Activated CD4-positive, alpha-beta T cell treated with anti-CD3 and anti-CD28 coated beads for 36 hours (primary cell): ENCODE measurements at regions of chr12 and their contacts with region 1.

Region 1: DNA sequence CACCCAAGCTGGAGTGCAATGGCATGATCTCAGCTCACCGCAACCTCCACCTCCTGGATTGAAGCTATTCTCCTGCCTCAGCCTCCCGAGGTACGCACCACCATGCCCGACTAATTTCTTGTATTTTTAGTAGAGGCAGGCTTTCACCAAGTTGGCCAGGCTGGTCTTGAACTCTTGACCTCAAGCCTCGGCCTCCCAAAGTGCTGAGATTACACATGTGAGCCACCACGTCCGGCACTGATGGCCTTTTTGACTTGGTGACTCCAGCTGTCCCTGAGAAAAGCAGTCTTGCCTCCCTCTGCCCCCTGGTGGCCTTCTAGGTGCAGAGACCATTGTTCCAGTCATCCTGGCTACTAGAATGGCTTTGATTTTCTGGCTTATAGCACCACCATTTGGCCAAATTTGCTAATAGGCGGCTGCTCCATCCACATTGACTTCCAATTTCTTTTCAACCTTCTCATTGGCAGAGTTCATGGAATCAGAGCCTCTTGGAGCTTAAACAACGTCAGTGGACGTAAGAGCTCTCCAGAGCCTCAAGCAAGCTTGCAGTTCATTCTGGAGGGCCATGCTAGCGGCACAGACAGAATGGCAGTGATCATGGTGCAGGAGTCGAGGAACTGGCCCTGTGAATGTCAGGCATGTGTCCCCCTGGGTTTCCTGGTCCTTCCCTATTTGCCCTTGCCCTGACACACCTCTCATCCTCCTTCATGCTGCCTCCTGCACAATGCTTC is 25.4 kb upstream of the EIF4B start:
- DNase-seq: peak; percentile 89
- ATAC-seq: peak; percentile 95
- H3K4me3 Mint-ChIP-seq: no peak overlapping the region
- H3K27ac Mint-ChIP-seq: no peak overlapping the region
- H3K4me1 Mint-ChIP-seq: no peaks in the 10 kb centered on the region
- H3K27me3 Mint-ChIP-seq: peaks cover 26% of the 10 kb centered on the region

Region 2: GRCh38 chr12:52156736-52157565 is 823.9 kb before region 1 on chr12:
- CTCF ChIA-PET with region 1: interaction called, 4 read pairs
- POLR2A ChIA-PET with region 1: no interaction called
- intact Hi-C with region 1: loop called in 1 of 2 experiments (anchors 5 kb)
- DNase-seq: peak; percentile 85
- ATAC-seq: peak; percentile 65
- H3K4me3 Mint-ChIP-seq: no peak overlapping the region
- H3K27ac Mint-ChIP-seq: no peak overlapping the region
- H3K4me1 Mint-ChIP-seq: peaks cover 27% of the 10 kb centered on the region
- H3K27me3 Mint-ChIP-seq: no peaks in the 10 kb centered on the region

Region 3: GRCh38 chr12:52582971-52583456 is 397.8 kb before region 1 on chr12:
- CTCF ChIA-PET with region 1: interaction called, 8 read pairs
- POLR2A ChIA-PET with region 1: no interaction called
- intact Hi-C with region 1: loop called in 1 of 2 experiments (anchors 1 kb)
- DNase-seq: peak; percentile 80
- ATAC-seq: peak; percentile 78
- H3K4me3 Mint-ChIP-seq: no peak overlapping the region
- H3K27ac Mint-ChIP-seq: no peak overlapping the region
- H3K4me1 Mint-ChIP-seq: peaks cover 51% of the 10 kb centered on the region
- H3K27me3 Mint-ChIP-seq: no peaks in the 10 kb centered on the region

Region 4: DNA sequence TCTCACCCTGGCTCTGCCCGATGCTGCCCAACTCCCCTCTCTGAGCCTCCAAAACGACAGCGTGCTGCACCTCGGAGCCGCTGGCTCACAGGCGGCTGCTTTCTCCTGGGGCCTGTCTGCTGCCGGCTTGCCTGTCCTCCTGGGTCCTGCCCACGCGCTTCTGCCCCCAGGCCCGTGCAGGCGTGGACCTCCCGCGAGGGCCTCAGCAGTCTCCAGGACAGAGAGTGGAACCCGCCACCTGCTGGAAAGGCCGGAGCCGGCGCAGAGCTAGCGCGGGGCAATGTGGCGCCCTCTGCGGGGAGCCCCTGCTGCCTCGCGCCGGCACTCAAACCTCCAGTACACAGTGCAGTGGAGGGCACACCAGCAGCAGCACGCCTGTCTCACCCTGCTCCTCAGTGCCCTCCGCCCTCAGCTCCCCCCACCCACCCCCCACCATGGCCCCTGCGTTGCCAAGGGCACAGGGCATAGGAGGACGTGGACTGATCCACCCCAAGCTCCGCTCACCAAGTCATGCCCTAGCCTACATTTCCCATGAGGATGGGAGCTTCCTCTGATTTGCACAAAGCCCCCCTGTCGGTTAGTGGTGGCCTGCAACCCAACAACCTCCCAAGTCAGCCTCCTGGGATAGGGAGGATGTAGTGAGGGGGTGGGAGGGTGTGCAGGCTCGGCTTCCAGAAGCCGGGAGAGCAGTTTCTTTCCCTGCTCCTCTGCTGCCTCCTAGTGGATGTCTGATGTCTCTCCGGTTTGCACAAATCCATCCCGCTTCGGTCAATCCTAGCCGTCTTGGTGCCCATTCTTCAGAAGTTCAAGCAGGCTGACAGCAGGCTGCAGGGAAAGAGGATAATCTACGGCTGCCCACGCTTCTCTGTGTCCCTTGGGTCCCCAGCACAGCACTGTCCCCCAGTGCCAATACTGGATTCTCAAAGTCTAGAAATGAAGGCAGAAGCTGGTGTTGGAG is 101.2 kb before region 1 on chr12:
- CTCF ChIA-PET with region 1: interaction called, 405 read pairs
- POLR2A ChIA-PET with region 1: interaction called, 3 read pairs
- intact Hi-C with region 1: loop called in 1 of 2 experiments (anchors 1 kb)
- DNase-seq: peak; percentile 88
- ATAC-seq: peak; percentile 95
- H3K4me3 Mint-ChIP-seq: peak overlapping the region; percentile 59
- H3K27ac Mint-ChIP-seq: no peak overlapping the region
- H3K4me1 Mint-ChIP-seq: peaks cover 8% of the 10 kb centered on the region
- H3K27me3 Mint-ChIP-seq: peaks cover 5% of the 10 kb centered on the region

Region 5: GRCh38 chr12:52895061-52895887 is 85.6 kb before region 1 on chr12:
- CTCF ChIA-PET with region 1: interaction called, 54 read pairs
- POLR2A ChIA-PET with region 1: no interaction called
- intact Hi-C with region 1: no loop called
- DNase-seq: no peak
- ATAC-seq: no peak
- H3K4me3 Mint-ChIP-seq: no peak overlapping the region
- H3K27ac Mint-ChIP-seq: no peak overlapping the region
- H3K4me1 Mint-ChIP-seq: no peaks in the 10 kb centered on the region
- H3K27me3 Mint-ChIP-seq: no peaks in the 10 kb centered on the region

Region 6: GRCh38 chr12:52992699-52993557 is 12.1 kb after region 1 on chr12:
- CTCF ChIA-PET with region 1: interaction called, 26 read pairs
- POLR2A ChIA-PET with region 1: interaction called, 3 read pairs
- intact Hi-C with region 1: no loop called
- DNase-seq: no peak
- ATAC-seq: no peak
- H3K4me3 Mint-ChIP-seq: no peak overlapping the region
- H3K27ac Mint-ChIP-seq: no peak overlapping the region
- H3K4me1 Mint-ChIP-seq: no peaks in the 10 kb centered on the region
- H3K27me3 Mint-ChIP-seq: no peaks in the 10 kb centered on the region